CD8-positive, alpha-beta T cell (primary cell): ENCODE measurements at regions of chr7 and their contacts with region 1.

Region 1: DNA sequence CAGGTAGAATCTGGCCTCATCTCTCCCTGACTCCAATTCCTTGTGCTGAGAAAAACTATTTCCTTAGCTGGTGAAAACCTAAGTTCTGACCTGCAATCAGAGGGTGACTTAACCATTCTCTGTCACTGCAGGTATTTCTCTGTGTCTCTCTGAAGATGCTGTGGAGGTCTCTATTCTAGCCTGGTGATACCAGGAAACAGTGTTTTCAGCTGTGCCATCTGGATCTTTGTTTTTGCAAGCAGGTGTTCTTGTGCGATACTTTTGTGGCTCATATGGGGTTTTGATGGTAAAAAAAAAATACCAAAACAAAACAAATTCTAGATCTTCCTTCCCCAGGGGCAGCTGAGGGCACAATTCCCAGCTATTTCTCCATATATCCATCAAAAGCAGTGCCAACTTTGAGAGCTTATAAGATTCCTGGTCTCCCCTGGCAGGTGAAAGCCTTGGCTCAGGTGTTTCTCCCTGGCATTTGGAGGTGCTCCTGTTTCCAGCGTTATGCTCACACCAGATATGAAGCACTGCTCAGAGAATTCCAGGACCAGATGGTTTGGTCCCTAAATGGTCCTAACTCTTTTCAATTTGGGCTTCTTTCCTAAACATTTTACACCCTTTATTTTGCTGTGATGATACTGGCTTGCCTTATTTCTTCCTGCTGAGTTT is 9.9 kb upstream of the NPVF start:
- DNase-seq: no peak
- ATAC-seq: no peak
- H3K4me3 ChIP-seq: no peak overlapping the region
- H3K4me3 Mint-ChIP-seq: no peak overlapping the region
- H3K27ac ChIP-seq: no peak overlapping the region
- H3K27ac Mint-ChIP-seq: no peak overlapping the region
- H3K4me1 ChIP-seq: no peaks in the 10 kb centered on the region
- H3K4me1 Mint-ChIP-seq: no peaks in the 10 kb centered on the region
- H3K27me3 ChIP-seq: no peaks in the 10 kb centered on the region
- H3K27me3 Mint-ChIP-seq: peaks cover 12% of the 10 kb centered on the region
- CTCF ChIP-seq: no peak

Region 2: DNA sequence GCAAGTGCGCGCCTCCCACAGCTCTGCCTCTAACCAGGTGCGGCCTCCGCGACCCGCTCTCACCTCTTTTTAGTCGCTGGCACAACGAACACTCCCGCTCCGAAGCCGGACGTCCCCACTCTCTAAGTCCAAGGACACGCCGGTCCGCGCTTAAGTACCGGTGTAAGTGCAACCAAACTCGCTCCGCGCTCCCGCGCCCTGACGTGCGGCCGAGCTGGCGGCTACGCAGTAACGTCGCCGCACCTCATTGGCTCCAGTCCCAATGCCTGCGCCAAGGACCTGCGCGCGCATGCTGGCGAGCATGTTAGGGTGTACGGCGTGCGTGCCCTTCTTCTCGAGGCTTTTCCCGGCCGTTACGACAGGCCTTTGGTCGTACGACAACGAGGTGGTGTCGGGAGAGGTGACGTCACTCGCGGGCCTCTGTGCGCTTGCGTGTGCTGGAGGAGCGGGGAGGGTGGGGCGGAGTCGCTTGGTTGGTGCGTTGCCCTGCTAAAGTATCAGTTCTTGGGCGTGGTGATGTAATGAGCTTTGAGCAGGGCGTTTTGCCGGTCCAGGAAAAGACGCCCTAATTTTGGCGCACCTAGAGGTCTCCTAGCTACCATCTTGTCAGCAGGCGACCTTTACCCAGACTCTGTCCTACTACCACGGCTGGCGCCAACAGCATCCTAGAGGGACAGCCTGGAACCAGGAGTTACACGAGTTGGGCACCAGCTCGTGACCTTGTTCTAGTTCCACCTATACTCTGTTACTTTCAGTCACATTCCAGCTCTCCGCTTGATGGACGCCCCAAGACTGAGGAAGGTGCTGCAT is 112.9 kb before region 1 on chr7 and contains the start of gene CYCS:
- CTCF ChIA-PET with region 1: no interaction called
- POLR2A ChIA-PET with region 1: no interaction called
- intact Hi-C with region 1: no loop called
- DNase-seq: peak; percentile 99 to 100 (median 99)
- ATAC-seq: peak; percentile 92
- H3K4me3 ChIP-seq: peak within 1 kb of the TSS; percentile 84 to 86
- H3K4me3 Mint-ChIP-seq: peak within 1 kb of the TSS; percentile 97
- H3K27ac ChIP-seq: peak within 1 kb of the TSS; percentile 96 to 97
- H3K27ac Mint-ChIP-seq: peak within 1 kb of the TSS; percentile 99
- H3K4me1 ChIP-seq: peaks cover 12% of the 10 kb centered on the region
- H3K4me1 Mint-ChIP-seq: peaks cover 22% of the 10 kb centered on the region
- H3K27me3 ChIP-seq: no peaks in the 10 kb centered on the region
- H3K27me3 Mint-ChIP-seq: no peaks in the 10 kb centered on the region
- CTCF ChIP-seq: no peak
- total RNA-seq, gene CYCS: 135 to 140 TPM

Region 3: DNA sequence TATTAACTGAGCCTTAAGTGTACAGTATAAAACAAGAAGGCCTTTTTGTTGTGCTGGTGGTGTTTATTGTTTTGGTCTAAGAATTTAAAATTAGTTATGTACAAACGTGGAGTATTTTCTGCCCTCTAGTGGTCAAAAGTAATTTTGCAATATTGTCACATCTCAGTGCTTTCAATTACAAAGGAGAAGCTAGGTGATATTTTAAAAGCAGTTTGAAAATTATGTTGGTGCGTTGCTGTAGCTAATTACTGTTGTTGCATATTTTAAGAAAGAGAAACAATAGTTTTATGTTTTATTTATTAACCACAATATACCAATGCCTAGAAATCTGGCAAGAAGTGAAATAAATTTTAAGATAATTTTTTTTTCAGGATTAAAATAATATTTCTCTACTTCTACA is 21.4 kb before region 1 on chr7:
- CTCF ChIA-PET with region 1: interaction called, 11 read pairs
- POLR2A ChIA-PET with region 1: no interaction called
- intact Hi-C with region 1: no loop called
- DNase-seq: peak in 2 of 9 experiments; percentile 55 to 64
- ATAC-seq: peak; percentile 38
- H3K4me3 ChIP-seq: no peak overlapping the region
- H3K4me3 Mint-ChIP-seq: no peak overlapping the region
- H3K27ac ChIP-seq: no peak overlapping the region
- H3K27ac Mint-ChIP-seq: no peak overlapping the region
- H3K4me1 ChIP-seq: no peaks in the 10 kb centered on the region
- H3K4me1 Mint-ChIP-seq: no peaks in the 10 kb centered on the region
- H3K27me3 ChIP-seq: no peaks in the 10 kb centered on the region
- H3K27me3 Mint-ChIP-seq: peaks cover 31% of the 10 kb centered on the region
- CTCF ChIP-seq: peak; percentile 97

Region 4: DNA sequence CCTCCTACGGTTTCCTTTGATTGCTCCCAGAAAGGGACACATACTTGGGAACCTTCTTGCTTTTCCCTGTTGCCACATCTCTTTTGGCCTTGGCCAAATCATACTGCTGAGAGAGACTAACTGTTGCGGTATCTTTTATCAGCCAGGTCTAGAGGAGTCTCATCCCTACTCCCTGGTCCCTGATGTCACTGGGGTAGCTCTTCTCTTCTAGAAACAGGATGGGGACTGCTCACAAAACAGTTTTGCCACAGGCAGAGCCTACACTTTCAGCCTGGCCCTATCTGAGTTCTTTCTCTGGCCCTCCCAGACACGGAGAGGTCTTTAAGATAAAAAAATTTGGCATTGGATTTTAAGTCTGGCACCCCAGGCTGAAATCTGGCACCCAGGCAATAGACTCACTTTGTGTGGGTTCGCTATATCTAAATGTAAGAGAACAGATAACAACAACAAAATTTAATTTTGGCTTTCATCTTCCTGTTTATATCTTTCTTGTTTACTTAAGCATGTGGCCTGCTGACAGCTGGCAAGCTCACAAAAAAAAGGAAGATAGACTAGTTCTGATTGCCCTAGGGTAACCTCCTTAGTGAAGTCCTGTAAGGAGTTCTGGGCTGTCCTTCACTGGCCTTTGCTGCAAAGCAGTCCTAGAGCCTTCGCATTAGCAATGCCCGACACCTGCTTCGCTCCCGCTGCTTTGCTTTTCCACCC is 218.4 kb after region 1 on chr7:
- CTCF ChIA-PET with region 1: no interaction called
- POLR2A ChIA-PET with region 1: no interaction called
- intact Hi-C with region 1: no loop called
- DNase-seq: no peak
- ATAC-seq: no peak
- H3K4me3 ChIP-seq: no peak overlapping the region
- H3K4me3 Mint-ChIP-seq: no peak overlapping the region
- H3K27ac ChIP-seq: no peak overlapping the region
- H3K27ac Mint-ChIP-seq: no peak overlapping the region
- H3K4me1 ChIP-seq: no peaks in the 10 kb centered on the region
- H3K4me1 Mint-ChIP-seq: no peaks in the 10 kb centered on the region
- H3K27me3 ChIP-seq: peaks cover 0 to 2% of the 10 kb centered on the region in 2 experiments
- H3K27me3 Mint-ChIP-seq: peaks cover 4% of the 10 kb centered on the region
- CTCF ChIP-seq: no peak